AG04449 (cell line): ENCODE measurements at regions of chr21 and their contacts with region 1.

Region 1: GRCh38 chr21:38126669-38127303 is 130.0 kb upstream of the KCNJ15 start:
- DNase-seq: no peak
- H3K4me3 ChIP-seq: no peak overlapping the region
- CTCF ChIP-seq: peak; percentile 84

Region 2: DNA sequence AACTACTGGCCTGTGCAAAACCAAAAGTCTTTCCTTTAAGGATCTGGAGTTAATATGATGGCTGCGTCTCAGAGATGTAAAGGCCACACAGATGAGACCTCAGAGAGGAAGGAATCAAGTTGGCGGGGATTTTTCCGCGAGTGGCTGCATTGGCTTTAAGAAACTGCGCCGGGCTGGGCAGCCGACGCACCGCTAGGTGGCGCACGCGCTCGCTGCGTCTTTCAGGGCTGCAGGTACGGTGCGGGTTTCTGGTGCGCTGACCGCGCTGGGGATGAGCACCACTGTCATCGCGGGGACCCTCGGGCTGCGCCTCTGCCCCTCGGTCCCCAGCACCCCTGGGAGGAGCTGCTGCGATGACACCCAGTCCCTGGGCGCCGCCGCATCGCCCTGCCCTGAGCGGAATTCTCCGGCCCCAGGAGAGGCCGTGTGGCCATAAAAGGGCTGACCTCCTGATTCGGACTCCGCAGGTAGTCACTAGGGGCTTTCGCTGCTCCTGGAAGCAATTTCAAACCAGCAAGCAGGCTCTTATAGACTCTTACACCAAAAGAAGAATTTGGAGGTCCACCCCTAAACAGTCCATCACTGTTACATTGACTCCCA is 451.5 kb before region 1 on chr21:
- CTCF ChIA-PET with region 1: interaction called, 48 read pairs
- POLR2A ChIA-PET with region 1: no interaction called
- DNase-seq: no peak
- H3K4me3 ChIP-seq: no peak overlapping the region
- CTCF ChIP-seq: peak; percentile 89

Region 3: DNA sequence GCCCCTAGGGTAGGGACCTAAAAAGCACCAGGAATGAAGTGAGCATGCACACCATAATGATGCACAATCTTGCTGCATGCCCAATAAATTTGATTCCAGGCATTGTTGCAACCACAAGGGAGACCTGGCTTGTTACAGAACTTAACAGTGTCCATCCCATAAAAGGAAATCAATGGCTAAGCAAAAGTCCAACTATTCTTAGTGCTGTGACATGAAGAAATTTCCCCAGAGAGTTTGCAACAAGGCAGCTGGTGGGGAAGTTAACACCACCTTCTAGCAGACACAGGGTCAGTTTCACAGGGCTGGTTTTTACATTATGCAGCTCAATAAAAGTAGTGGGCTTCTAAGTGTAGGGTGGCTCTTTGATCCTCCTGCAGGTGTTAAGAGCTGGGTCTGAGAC is 431.7 kb before region 1 on chr21:
- CTCF ChIA-PET with region 1: interaction called, 36 read pairs
- POLR2A ChIA-PET with region 1: no interaction called
- DNase-seq: no peak
- H3K4me3 ChIP-seq: no peak overlapping the region
- CTCF ChIP-seq: no peak

Region 4: DNA sequence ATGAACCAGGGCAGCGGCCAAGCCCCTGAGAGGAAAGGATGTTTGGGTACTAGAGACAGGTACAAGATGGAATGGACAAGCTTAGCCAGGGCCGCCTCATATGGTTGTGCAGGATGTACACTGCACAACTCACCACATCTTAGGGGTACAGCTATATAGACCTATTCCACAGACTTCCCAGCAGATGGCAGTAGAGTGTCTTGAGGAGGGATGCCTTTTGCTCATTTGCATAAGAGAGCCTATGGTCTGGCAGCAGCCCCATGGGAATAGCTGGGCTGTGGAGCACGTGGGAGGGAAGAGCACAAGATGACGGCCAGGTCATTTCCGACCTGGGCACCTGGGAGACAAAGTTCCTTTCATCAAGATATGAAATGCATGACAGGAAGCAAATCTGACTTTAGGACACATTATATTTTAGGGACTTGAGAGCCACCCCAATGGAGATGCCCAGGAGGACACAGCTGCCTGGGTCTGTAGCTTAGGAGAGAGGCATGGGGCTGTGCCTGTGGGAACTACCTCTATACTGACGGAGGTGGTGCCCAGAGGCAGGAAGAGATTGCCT is 426.1 kb before region 1 on chr21:
- CTCF ChIA-PET with region 1: interaction called, 36 read pairs
- POLR2A ChIA-PET with region 1: no interaction called
- DNase-seq: peak; percentile 45
- H3K4me3 ChIP-seq: no peak overlapping the region
- CTCF ChIP-seq: peak; percentile 72

Region 5: GRCh38 chr21:37758982-37759381 is 367.8 kb before region 1 on chr21:
- CTCF ChIA-PET with region 1: interaction called, 14 read pairs
- POLR2A ChIA-PET with region 1: no interaction called
- DNase-seq: no peak
- H3K4me3 ChIP-seq: no peak overlapping the region
- CTCF ChIP-seq: peak; percentile 94

Region 6: GRCh38 chr21:38112219-38112789 is 14.5 kb before region 1 on chr21:
- CTCF ChIA-PET with region 1: interaction called, 10 read pairs
- POLR2A ChIA-PET with region 1: no interaction called
- DNase-seq: no peak
- H3K4me3 ChIP-seq: no peak overlapping the region
- CTCF ChIP-seq: no peak

Region 7: GRCh38 chr21:38140210-38140907 is 13.6 kb after region 1 on chr21:
- CTCF ChIA-PET with region 1: interaction called, 11 read pairs
- POLR2A ChIA-PET with region 1: no interaction called
- DNase-seq: no peak
- H3K4me3 ChIP-seq: no peak overlapping the region
- CTCF ChIP-seq: no peak